ENCODE measurements at regions of chr9 and their contacts with region 1.

Region 1: DNA sequence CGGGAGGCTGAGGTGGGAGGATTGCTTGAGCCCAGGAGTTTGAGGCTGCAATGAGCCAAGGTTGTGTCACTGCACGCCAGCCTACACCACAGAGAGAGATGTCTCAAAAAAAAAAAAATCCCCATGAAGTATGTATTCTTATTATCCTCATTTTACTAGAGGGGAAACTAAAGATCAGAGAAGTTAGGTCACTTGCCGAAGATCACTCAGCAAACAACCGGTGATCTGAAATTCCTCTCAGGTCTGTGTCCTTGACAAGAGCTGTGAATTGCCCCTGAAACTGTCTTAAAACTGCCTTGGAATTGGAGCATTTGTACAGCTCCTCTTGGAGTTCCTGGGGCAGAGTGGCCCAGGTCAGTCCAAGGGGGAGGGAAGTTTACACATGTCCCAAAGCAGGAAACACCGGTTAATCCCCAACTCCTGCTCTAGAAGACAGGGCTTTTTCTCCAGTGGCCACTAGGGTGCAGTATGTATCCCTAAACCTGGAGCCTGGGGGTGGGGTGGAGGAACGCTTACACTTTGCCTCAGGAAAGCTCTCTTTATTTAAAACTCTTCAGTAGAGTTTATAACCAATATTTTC is 27.6 kb downstream of the AQP7 start:
- H3K4me3 ChIP-seq: no peak overlapping the region
- H3K27ac ChIP-seq: no peak overlapping the region
- H3K4me1 ChIP-seq: no peaks in the 10 kb centered on the region
- CTCF ChIP-seq: no peak; the same call in 1 of the 2 replicates

Region 2: DNA sequence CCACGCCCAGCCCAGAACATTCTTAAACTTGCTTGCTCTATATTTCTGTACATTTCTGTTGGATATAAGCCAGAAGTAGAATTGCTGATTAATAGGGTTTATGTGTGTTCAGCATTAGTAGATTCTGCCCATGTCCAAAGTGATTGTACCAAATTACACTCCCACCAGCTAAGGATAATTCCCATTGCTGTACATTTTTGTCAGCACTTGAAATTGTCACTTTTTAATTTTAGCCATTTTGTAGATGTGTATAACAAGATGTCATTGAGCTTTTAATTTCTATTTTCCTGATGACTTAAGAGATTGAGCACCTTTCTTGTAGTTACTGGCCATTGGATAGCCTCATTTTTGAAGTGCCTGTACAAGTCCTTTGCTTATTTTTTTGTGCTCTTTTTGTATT is 18.8 kb before region 1 on chr9:
- CTCF ChIA-PET with region 1: interaction called, 20 read pairs
- POLR2A ChIA-PET with region 1: no interaction called
- H3K4me3 ChIP-seq: no peak overlapping the region
- H3K27ac ChIP-seq: no peak overlapping the region
- H3K4me1 ChIP-seq: peaks cover 11% of the 10 kb centered on the region
- CTCF ChIP-seq: no peak

Region 3: GRCh38 chr9:33404788-33405362 is 30.2 kb after region 1 on chr9:
- CTCF ChIA-PET with region 1: interaction called, 29 read pairs
- POLR2A ChIA-PET with region 1: no interaction called
- H3K4me3 ChIP-seq: no peak overlapping the region
- H3K27ac ChIP-seq: no peak overlapping the region
- H3K4me1 ChIP-seq: no peaks in the 10 kb centered on the region
- CTCF ChIP-seq: no peak

Region 4: DNA sequence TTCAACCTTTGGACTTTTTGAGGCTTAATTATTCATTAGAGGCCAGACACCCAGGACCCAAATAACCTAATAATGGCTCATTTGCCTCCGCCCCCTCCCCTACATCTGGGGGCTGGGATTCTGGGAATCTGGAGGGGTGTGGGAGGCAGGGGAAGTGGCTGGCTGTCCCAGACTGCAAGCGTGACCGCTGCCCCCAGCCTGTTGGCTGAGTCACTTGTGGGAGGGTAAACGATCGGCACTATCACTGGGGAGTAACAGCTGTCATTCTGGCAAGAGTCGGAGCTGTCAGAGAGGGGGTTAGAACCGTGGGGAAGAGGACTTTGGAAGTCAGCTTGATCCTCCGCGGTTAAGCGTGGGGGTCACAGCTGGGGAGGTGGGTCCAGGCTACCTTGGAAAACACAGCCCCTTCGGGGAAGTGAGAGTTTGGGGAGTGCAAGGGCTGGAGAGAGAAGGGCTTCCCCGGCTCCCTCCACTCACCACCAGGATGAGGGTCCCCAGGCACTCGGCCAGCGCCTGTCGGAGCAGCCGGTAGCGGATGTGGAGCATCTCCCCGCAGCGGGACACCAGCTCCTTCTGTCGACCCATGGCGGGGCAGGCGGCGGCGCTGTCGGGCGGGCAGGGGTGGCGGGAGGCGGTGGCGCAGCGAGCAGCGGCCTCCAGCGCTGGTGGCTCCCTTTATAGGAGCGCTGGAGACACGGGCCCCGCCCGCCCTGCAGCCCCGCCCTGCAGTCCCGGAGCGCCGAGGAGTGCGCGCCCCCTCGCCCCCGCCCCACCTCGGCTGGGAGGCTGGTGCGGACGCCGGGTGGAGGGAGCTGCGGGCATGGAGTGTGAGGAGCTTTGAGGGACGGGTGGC is 72.4 kb after region 1 on chr9 and contains the start of gene AQP3:
- CTCF ChIA-PET with region 1: interaction called, 91 read pairs
- POLR2A ChIA-PET with region 1: no interaction called
- H3K4me3 ChIP-seq: peak within 1 kb of the TSS; percentile 46
- H3K27ac ChIP-seq: no peak within 1 kb of the TSS; the same call in 1 of the 2 replicates
- H3K4me1 ChIP-seq: no peaks in the 10 kb centered on the region; the same call in 1 of the 2 replicates
- CTCF ChIP-seq: peak; percentile 59

Region 5: DNA sequence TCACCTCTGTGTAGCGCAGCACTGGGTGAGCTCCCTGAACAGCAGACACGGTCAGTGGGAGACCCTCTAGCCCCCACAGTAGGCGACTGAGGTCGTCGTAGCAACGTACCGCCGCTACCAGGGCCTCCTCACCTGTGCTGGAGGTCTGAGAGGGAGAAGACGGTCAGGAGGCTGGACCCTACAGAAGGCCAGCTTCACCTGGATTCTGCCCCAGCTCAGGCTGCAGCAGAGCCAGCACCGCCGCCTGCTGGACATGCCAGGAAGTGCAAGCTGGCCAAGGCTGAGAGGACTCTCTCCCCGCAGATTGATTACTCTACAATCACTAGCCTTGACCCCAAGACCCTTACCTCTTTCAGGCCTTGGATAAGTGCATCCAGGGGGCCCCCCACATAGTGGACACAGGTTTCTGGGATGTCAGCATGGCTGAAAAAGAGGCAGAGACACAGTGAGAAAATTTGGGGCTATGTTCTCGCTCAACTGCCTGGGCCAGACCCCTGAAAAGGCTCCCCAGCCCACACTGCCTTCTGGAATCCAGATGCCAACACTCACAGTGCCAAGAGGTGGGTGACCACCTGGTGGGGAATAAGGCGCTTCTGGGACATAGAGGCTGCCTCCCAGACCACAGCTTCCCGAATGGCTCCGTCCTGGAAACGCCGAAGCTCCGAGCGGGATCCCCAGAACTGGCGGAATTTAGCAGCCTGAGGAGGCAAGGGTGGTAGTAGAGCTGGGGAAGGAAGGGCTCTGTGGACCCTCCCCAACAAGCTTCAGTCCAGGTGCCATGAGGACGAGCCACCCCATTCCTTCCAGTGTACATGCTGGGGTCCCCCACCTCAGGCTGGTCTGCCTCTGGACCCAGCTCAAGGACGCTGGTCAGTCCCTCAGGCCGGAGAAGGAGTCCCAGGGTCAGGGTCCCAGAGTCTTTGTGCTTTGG is 92.1 kb after region 1 on chr9:
- CTCF ChIA-PET with region 1: interaction called, 111 read pairs
- POLR2A ChIA-PET with region 1: interaction called, 4 read pairs
- H3K4me3 ChIP-seq: no peak overlapping the region
- H3K27ac ChIP-seq: no peak overlapping the region
- H3K4me1 ChIP-seq: no peaks in the 10 kb centered on the region
- CTCF ChIP-seq: peak; percentile 78

Measured in HEK293 (cell line).